Esophagus squamous epithelium (tissue), 5 donors: ENCODE measurements at regions of chr10 and their contacts with region 1.

Region 1: DNA sequence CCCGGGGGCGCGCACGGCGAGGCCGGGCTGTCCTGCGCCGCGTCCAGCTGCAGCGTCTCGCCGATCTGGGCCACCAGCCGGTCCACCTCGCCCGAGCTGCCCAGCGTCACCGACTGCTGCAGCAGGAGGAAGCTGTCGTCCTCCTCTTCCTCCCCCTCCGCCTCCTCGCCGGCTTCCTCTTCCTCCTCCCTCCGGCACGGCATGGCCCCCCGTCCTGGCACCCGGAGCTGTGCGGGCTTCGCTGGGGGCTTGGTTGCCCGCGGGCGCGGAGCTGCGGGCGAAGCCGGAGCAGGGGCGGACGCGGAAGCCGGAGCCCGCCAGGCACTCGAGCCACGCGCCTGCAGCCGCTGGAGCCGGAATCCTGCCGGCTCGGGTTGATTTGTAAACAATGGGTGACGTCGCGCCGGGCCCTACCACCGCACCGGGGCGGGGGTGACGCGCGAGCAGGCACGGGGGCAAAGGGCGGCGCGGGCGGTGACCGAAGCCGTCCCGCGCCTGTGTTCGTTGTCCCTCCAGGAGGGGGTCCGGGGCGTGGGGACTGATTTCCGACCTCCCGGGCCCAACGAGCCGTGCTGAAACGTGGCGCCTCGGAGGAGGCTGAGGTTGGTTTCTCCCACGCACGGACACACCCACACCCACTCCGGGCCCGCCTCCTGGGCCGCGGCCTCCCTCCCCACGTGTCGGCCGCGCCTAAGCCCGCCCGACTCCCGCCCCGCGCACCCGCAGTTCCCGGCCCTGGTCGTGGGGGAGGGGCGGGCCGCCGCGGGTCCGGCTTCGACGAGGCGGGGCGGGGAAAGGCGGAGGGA is at the start of gene FRAT2:
- DNase-seq: peak; percentile 54
- H3K4me3 ChIP-seq: peak within 1 kb of the TSS; percentile 64 to 85 (median 78)
- H3K27ac ChIP-seq: peak within 1 kb of the TSS; percentile 95 to 98 (median 97)
- H3K4me1 ChIP-seq: peaks cover 25 to 77% (median 56%) of the 10 kb centered on the region in 3 donors
- H3K27me3 ChIP-seq: no peaks in the 10 kb centered on the region
- CTCF ChIP-seq: peak in 1 of 6 experiments; percentile 14
- POLR2A ChIP-seq: peak in 3 of 4 donors; percentile 2 to 94 (median 87)
- total RNA-seq, gene FRAT2: 16.6 to 29.4 (median 20.3) TPM

Region 2: DNA sequence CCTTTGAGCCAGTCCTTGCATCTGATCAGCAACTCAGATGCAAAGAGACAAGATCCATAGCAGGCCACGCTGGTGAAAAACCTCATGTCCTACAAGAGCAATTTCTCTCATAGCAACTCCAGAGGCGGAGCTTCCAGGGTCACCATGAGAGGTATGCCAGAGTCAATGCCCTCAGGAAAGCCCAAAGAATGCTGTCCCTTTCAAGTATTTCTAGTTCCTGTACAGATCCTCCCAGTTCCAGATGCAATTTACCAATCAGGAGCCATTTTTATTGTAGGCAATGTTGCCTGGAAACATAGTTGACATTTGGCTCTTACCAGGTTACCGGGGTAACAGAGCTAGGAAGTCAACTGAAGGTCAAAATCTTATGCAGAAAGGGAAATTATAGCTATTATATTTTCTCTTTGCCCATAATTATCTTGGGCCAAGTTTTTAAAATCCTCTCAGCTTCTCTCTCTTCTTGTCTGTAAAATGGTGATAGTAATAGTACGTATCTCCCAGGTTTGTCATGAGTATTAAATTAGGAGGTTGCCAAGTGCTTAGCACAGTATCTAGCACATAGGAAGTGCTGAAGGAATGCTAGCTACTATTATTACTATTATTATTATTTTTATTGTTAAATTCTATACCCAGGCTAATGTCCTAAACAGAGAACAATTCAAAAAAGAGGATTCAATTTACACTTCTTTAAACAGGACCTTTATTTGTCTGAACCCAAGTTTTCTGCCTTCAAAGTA is 701.4 kb before region 1 on chr10:
- intact Hi-C with region 1: no loop called
- DNase-seq: no peak
- H3K4me3 ChIP-seq: no peak overlapping the region
- H3K27ac ChIP-seq: no peak overlapping the region
- H3K4me1 ChIP-seq: peaks cover 0 to 14% (median 0%) of the 10 kb centered on the region in 3 donors
- H3K27me3 ChIP-seq: no peaks in the 10 kb centered on the region
- CTCF ChIP-seq: no peak
- POLR2A ChIP-seq: no peak

Region 3: DNA sequence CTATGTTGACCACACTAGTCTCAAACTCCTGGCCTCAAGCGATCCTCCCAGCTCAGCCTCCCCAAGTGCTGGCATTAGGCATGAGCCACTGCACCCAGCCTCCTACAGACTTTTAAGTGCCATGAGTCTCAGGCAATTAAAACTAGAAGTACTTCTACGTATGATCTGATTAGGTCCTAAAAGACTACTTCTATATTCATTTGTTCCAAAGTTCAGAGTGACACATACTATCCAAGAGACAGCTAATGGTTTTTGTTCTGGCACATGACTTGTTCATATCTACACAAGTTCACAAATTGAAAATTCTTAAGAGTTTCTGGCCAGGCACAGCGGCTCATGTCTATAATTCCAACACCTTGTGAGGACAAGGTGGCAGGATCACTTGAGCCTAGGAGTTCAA is 53.8 kb before region 1 on chr10:
- intact Hi-C with region 1: loop called (anchors 10 kb)
- DNase-seq: no peak
- H3K4me3 ChIP-seq: no peak overlapping the region
- H3K27ac ChIP-seq: no peak overlapping the region
- H3K4me1 ChIP-seq: peaks cover 4 to 23% (median 17%) of the 10 kb centered on the region in 3 donors
- H3K27me3 ChIP-seq: no peaks in the 10 kb centered on the region
- CTCF ChIP-seq: no peak
- POLR2A ChIP-seq: no peak